K562 (cell line): ENCODE measurements at regions of chr6 and their contacts with region 1.

Region 1: GRCh38 chr6:52664186-52664990 is 6.5 kb upstream of the TMEM14A start:
- DNase-seq: peak; percentile 90 to 98 (median 94)
- ATAC-seq: peak; percentile 98
- H3K4me3 ChIP-seq: peak overlapping the region; percentile 63
- H3K27ac ChIP-seq: peak overlapping the region; percentile 59
- H3K4me1 ChIP-seq: peaks cover 7 to 13% of the 10 kb centered on the region in 2 experiments; a peak in 4 of 5 replicates
- H3K27me3 ChIP-seq: no peaks in the 10 kb centered on the region
- CTCF ChIP-seq: no peak
- EP300 ChIP-seq: no peak
- POLR2A ChIP-seq: peak; percentile 94
- RAD21 ChIP-seq: no peak

Region 2: GRCh38 chr6:52284460-52285176 is 379.8 kb before region 1 on chr6 and contains the start of gene MCM3:
- CTCF ChIA-PET with region 1: interaction called, 5 read pairs
- POLR2A ChIA-PET with region 1: interaction called, 5 read pairs
- in situ Hi-C with region 1: no loop called
- intact Hi-C with region 1: loop called (anchors 1 kb)
- DNase-seq: peak; percentile 95 to 99 (median 97)
- ATAC-seq: peak; percentile 98
- H3K4me3 ChIP-seq: peak within 1 kb of the TSS; percentile 77
- H3K27ac ChIP-seq: peak within 1 kb of the TSS; percentile 88
- H3K4me1 ChIP-seq: peaks cover 6 to 24% of the 10 kb centered on the region in 2 experiments
- H3K27me3 ChIP-seq: no peaks in the 10 kb centered on the region
- CTCF ChIP-seq: no peak
- EP300 ChIP-seq: 0 out of 2 replicates have a peak, but pooled peaks have one; percentile 3
- POLR2A ChIP-seq: peak; percentile 90
- RAD21 ChIP-seq: no peak
- polyA plus RNA-seq, gene MCM3: 76.1 to 141 TPM

Region 3: DNA sequence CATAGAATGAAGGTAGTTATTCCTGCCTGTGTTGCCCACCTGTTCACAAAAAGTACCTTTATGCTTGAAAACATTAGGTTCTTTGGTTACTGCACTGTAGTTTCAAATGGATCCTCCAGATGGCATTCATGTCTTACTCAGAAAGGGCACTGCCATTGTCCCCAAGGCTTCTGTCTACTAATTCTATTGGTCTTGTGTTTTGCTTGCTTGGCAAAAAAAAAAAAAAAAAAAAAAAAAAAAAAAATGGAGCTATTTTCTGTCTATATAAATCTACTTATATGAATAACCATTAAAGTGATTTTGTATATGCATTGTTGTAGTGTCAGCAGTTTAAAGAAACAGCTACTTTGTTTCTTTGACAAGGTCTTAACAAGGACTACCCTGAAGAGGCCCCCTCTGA is 256.9 kb before region 1 on chr6:
- CTCF ChIA-PET with region 1: interaction called, 16 read pairs
- POLR2A ChIA-PET with region 1: interaction called, 5 read pairs
- in situ Hi-C with region 1: no loop called
- intact Hi-C with region 1: loop called (anchors 2 kb)
- DNase-seq: peak; percentile 24 to 57 (median 42)
- ATAC-seq: peak; percentile 77
- H3K4me3 ChIP-seq: no peak overlapping the region
- H3K27ac ChIP-seq: no peak overlapping the region
- H3K4me1 ChIP-seq: peaks cover 0 to 4% of the 10 kb centered on the region in 2 experiments; a peak in 1 of 5 replicates
- H3K27me3 ChIP-seq: no peaks in the 10 kb centered on the region; a peak in 1 of 5 replicates
- CTCF ChIP-seq: peak; percentile 49 to 71 (median 52); a peak in 4 of 6 replicates
- EP300 ChIP-seq: no peak
- POLR2A ChIP-seq: no peak
- RAD21 ChIP-seq: peak; percentile 58 to 77

Region 4: DNA sequence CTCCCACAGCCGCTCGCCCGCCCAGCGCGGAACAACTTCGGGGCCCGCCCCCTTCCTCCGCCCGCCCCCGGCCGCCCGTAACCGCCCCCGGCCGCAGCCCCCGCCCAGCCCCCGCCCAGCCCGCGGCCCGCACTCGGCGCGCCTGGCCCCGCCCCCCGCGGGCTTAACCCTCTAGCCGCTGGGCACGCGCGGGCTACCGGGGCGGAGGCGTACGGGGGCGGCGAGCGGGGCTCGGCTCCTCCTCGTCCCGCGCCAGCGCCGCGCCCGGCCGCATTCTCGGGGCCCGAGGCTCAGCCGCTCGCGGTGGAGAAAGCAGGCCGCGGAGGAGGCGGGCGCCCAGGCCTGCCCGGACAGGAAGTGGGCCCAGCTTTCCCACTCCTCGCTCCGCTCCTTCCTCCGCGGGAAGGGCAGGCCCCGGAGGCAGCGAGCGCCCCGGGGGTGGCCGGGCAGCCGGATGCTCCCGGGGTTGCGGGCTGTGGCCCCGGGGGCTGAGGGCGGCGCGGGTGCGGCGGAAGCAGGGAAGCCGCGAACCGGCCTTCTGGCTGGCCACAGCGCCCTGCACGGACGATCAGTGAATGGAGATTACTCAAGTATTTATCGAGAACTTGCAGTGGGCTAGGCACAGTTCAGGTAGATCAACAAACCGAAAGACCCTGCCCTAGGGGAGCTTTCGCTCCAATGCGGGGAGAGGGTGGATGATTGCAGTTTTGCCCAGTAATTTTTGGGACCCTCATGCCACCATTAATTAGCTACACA is 87.2 kb before region 1 on chr6 and contains the start of gene TRAM2:
- CTCF ChIA-PET with region 1: interaction called, 4 read pairs
- POLR2A ChIA-PET with region 1: interaction called, 3 read pairs
- in situ Hi-C with region 1: no loop called
- intact Hi-C with region 1: loop called (anchors 1 kb)
- DNase-seq: peak; percentile 89 to 95 (median 94)
- ATAC-seq: peak; percentile 82
- H3K4me3 ChIP-seq: peak within 1 kb of the TSS; percentile 77
- H3K27ac ChIP-seq: peak within 1 kb of the TSS; percentile 85
- H3K4me1 ChIP-seq: peaks cover 22 to 30% of the 10 kb centered on the region in 2 experiments; a peak in 4 of 5 replicates
- H3K27me3 ChIP-seq: no peaks in the 10 kb centered on the region
- CTCF ChIP-seq: peak; percentile 18 to 28 (median 26); a peak in 2 of 6 replicates
- EP300 ChIP-seq: no peak; the same call in 1 of the 2 replicates
- POLR2A ChIP-seq: peak; percentile 80
- RAD21 ChIP-seq: peak in 1 of 2 experiments; percentile 31; a peak in 2 of 4 replicates
- polyA plus RNA-seq, gene TRAM2: 2.6 to 2.8 TPM

Region 5: GRCh38 chr6:52697903-52698302 is 33.5 kb after region 1 on chr6:
- CTCF ChIA-PET with region 1: no interaction called
- POLR2A ChIA-PET with region 1: no interaction called
- in situ Hi-C with region 1: no loop called
- intact Hi-C with region 1: loop called (anchors 2 kb)
- DNase-seq: peak in 1 of 4 experiments; percentile 22
- ATAC-seq: peak; percentile 76
- H3K4me3 ChIP-seq: no peak overlapping the region
- H3K27ac ChIP-seq: no peak overlapping the region
- H3K4me1 ChIP-seq: no peaks in the 10 kb centered on the region
- H3K27me3 ChIP-seq: no peaks in the 10 kb centered on the region
- CTCF ChIP-seq: peak; percentile 13 to 48 (median 14); a peak in 2 of 6 replicates
- EP300 ChIP-seq: no peak
- POLR2A ChIP-seq: no peak
- RAD21 ChIP-seq: peak in 1 of 2 experiments; percentile 38; a peak in 2 of 4 replicates

Region 6: GRCh38 chr6:53556986-53557715 is 892.8 kb after region 1 on chr6:
- CTCF ChIA-PET with region 1: no interaction called
- POLR2A ChIA-PET with region 1: no interaction called
- in situ Hi-C with region 1: no loop called
- intact Hi-C with region 1: no loop called
- DNase-seq: no peak
- ATAC-seq: no peak
- H3K4me3 ChIP-seq: no peak overlapping the region
- H3K27ac ChIP-seq: no peak overlapping the region
- H3K4me1 ChIP-seq: no peaks in the 10 kb centered on the region
- H3K27me3 ChIP-seq: no peaks in the 10 kb centered on the region
- CTCF ChIP-seq: no peak
- EP300 ChIP-seq: no peak
- POLR2A ChIP-seq: no peak
- RAD21 ChIP-seq: no peak